B cell (primary cell): ENCODE measurements at regions of chr16 and their contacts with region 1.

Region 1: DNA sequence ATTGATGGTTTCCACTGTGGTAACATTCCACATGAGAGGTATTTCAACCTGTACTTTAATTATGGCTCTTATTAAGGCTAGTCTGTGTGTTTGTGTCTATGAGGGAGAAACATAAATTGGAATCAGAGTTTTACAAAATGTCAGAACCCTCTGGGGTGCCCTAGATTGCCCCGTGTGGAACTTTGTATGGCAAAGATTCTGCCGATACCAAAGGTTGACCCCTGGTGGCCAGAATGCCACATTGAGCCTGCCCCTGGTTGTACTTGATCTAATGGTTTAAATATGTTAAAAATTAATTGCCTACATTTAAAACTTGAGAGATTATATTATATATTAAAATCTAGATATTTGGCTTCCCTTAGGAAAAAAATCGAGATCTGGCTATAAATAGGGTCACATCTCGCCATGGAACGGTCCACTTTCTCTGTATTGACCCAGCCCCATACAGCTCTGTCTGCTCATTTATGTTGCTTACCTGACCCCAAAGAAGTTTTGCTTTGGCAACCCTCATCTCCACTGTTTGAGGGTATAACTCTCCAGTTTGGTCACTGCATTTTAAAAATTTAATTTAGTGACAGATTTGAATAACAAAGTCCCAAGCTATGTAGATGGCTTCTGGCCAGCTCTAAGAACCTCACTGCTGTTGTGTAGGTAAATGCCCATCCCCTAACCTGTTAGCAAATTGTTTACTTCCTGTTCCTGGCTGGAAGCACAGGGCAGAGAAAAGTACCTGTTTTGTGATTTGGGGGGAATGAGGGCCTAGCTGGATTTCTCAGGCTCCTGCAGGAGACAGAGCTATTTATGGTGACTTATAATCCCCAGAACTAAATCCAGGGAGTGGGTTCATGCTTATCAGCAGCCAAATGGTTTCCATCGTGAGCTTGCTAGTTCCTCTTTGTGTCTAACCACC is 95.0 kb downstream of the PLCG2 start:
- DNase-seq: peak; percentile 80
- ATAC-seq: peak; percentile 93
- H3K4me3 ChIP-seq: no peak overlapping the region
- H3K4me3 Mint-ChIP-seq: peak overlapping the region; percentile 4
- H3K27ac ChIP-seq: peak overlapping the region in 1 of 2 donors; percentile 48
- H3K27ac Mint-ChIP-seq: peak overlapping the region; percentile 67
- H3K4me1 ChIP-seq: peaks cover 22 to 24% of the 10 kb centered on the region in 2 donors
- H3K4me1 Mint-ChIP-seq: peaks cover 41% of the 10 kb centered on the region
- H3K27me3 ChIP-seq: no peaks in the 10 kb centered on the region
- H3K27me3 Mint-ChIP-seq: no peaks in the 10 kb centered on the region
- CTCF ChIP-seq: peak; percentile 97

Region 2: DNA sequence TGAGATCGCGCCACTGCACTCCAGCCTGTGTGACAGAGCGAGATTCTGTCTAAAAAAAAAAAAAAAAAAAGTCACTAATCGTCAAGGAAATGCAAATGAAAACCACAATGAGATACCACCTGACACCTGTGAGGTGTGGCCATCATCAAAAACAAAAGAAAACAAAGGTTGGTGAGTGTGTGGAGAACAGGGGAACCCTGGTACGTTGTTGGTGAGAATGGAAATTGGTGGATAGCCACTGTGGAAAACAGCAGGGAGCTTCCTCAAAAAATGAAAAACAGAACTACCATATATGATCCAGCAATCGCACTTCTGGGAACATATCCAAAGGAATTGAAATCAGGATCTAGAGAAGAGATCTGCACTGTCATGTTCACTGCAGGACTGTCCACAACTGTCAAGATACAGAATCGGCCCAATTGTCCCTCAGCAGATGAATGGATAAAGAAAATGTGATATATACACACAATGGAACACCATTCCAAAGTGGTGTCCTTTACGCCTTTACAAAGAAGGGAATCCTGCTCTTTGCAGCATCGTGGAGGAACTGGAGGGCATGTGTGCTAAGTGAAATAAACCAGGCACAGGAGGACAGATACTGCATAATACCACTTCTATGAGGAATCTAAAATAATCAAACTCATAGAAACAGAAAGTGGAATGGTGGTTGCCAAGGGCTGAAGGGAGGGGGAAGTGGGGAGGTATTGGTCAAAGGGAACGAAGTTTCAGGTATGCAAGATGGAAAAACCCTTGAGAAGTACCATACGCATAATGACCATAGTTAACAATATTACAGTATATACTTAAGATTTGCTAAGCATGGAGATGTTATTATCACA is 158.5 kb before region 1 on chr16:
- CTCF ChIA-PET with region 1: interaction called, 10 read pairs
- POLR2A ChIA-PET with region 1: no interaction called
- intact Hi-C with region 1: no loop called
- DNase-seq: peak; percentile 82
- ATAC-seq: peak; percentile 74
- H3K4me3 ChIP-seq: peak overlapping the region; percentile 15 to 63 (median 24)
- H3K4me3 Mint-ChIP-seq: peak overlapping the region; percentile 90
- H3K27ac ChIP-seq: peak overlapping the region; percentile 65 to 86
- H3K27ac Mint-ChIP-seq: peak overlapping the region; percentile 89
- H3K4me1 ChIP-seq: peaks cover 42 to 57% of the 10 kb centered on the region in 2 donors
- H3K4me1 Mint-ChIP-seq: peaks cover 50% of the 10 kb centered on the region
- H3K27me3 ChIP-seq: no peaks in the 10 kb centered on the region
- H3K27me3 Mint-ChIP-seq: no peaks in the 10 kb centered on the region
- CTCF ChIP-seq: no peak

Region 3: GRCh38 chr16:81752225-81752875 is 121.7 kb before region 1 on chr16:
- CTCF ChIA-PET with region 1: interaction called, 18 read pairs
- POLR2A ChIA-PET with region 1: no interaction called
- intact Hi-C with region 1: loop called (anchors 1 kb)
- DNase-seq: peak; percentile 87
- ATAC-seq: peak; percentile 96
- H3K4me3 ChIP-seq: peak overlapping the region in 4 of 5 experiments; percentile 6 to 58 (median 34)
- H3K4me3 Mint-ChIP-seq: peak overlapping the region; percentile 67
- H3K27ac ChIP-seq: peak overlapping the region; percentile 76 to 87
- H3K27ac Mint-ChIP-seq: peak overlapping the region; percentile 87
- H3K4me1 ChIP-seq: peaks cover 67 to 82% of the 10 kb centered on the region in 2 donors
- H3K4me1 Mint-ChIP-seq: peaks cover 67% of the 10 kb centered on the region
- H3K27me3 ChIP-seq: no peaks in the 10 kb centered on the region
- H3K27me3 Mint-ChIP-seq: no peaks in the 10 kb centered on the region
- CTCF ChIP-seq: no peak

Region 4: DNA sequence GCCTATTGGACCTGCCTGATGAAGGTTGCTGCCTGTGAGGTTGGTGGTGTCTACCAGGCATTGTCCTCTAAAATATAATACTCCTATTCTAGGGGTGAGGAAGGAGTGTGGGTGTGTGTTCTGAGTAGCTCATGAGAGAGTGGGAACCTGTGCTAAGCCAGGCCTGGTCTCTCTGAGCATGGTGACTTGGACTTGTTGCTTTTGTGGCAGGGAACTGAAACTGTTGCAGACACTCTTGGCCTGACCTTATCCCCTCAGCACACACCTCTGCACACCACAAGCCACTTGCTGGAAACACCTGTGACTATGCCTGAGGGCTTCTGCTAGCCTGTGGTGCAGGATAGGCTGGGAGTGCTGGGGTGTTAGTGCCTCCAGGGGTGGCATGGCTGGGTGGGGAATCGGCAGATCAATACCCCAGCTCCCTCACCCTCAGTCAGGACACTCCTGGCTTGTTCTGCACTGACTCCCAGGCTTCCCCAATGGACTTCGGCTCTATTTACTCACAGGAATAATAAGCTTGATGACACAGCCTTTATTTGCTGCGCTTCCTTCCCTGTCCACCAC is 65.1 kb before region 1 on chr16:
- CTCF ChIA-PET with region 1: interaction called, 11 read pairs
- POLR2A ChIA-PET with region 1: interaction called, 3 read pairs
- intact Hi-C with region 1: no loop called
- DNase-seq: peak; percentile 91
- ATAC-seq: peak; percentile 78
- H3K4me3 ChIP-seq: peak overlapping the region in 4 of 5 experiments; percentile 5 to 43 (median 20)
- H3K4me3 Mint-ChIP-seq: peak overlapping the region; percentile 77
- H3K27ac ChIP-seq: peak overlapping the region; percentile 85 to 94
- H3K27ac Mint-ChIP-seq: peak overlapping the region; percentile 97
- H3K4me1 ChIP-seq: peaks cover 87 to 91% of the 10 kb centered on the region in 2 donors
- H3K4me1 Mint-ChIP-seq: peaks cover 96% of the 10 kb centered on the region
- H3K27me3 ChIP-seq: no peaks in the 10 kb centered on the region
- H3K27me3 Mint-ChIP-seq: no peaks in the 10 kb centered on the region
- CTCF ChIP-seq: no peak

Region 5: GRCh38 chr16:81831722-81832126 is 42.4 kb before region 1 on chr16:
- CTCF ChIA-PET with region 1: interaction called, 20 read pairs
- POLR2A ChIA-PET with region 1: no interaction called
- intact Hi-C with region 1: loop called (anchors 2 kb)
- DNase-seq: peak; percentile 88
- ATAC-seq: peak; percentile 75
- H3K4me3 ChIP-seq: peak overlapping the region; percentile 38 to 58 (median 49)
- H3K4me3 Mint-ChIP-seq: peak overlapping the region; percentile 85
- H3K27ac ChIP-seq: peak overlapping the region; percentile 73 to 77
- H3K27ac Mint-ChIP-seq: peak overlapping the region; percentile 90
- H3K4me1 ChIP-seq: peaks cover 94 to 100% of the 10 kb centered on the region in 2 donors
- H3K4me1 Mint-ChIP-seq: peaks cover 92% of the 10 kb centered on the region
- H3K27me3 ChIP-seq: no peaks in the 10 kb centered on the region
- H3K27me3 Mint-ChIP-seq: no peaks in the 10 kb centered on the region
- CTCF ChIP-seq: peak; percentile 60

Region 6: GRCh38 chr16:81855552-81856153 is 18.4 kb before region 1 on chr16:
- CTCF ChIA-PET with region 1: interaction called, 32 read pairs
- POLR2A ChIA-PET with region 1: interaction called, 5 read pairs
- intact Hi-C with region 1: no loop called
- DNase-seq: no peak
- ATAC-seq: no peak
- H3K4me3 ChIP-seq: no peak overlapping the region
- H3K4me3 Mint-ChIP-seq: no peak overlapping the region
- H3K27ac ChIP-seq: peak overlapping the region in 1 of 2 donors; percentile 47
- H3K27ac Mint-ChIP-seq: peak overlapping the region; percentile 69
- H3K4me1 ChIP-seq: peaks cover 22 to 36% of the 10 kb centered on the region in 2 donors
- H3K4me1 Mint-ChIP-seq: peaks cover 49% of the 10 kb centered on the region
- H3K27me3 ChIP-seq: no peaks in the 10 kb centered on the region
- H3K27me3 Mint-ChIP-seq: no peaks in the 10 kb centered on the region
- CTCF ChIP-seq: no peak

Region 7: DNA sequence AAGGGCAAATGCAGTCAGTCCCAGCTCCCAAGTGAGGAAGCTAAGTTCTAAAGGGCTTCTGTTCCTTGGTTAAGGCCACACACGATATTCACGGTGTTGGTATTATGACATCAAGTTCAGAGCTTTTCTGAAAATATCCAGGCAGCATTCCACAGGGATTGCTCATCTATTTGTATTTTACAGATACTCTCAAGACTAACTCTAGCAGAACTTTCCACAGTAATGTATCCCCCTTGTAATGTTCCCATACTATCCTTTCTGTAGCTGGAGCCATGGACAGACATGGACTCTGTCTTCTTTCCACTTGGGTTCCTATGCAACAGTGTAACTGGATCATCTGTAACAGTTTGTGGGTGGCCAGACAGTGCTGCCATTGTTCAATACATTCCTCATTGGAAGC is 123.6 kb after region 1 on chr16:
- CTCF ChIA-PET with region 1: no interaction called
- POLR2A ChIA-PET with region 1: no interaction called
- intact Hi-C with region 1: no loop called
- DNase-seq: no peak
- ATAC-seq: no peak
- H3K4me3 ChIP-seq: no peak overlapping the region
- H3K4me3 Mint-ChIP-seq: no peak overlapping the region
- H3K27ac ChIP-seq: no peak overlapping the region
- H3K27ac Mint-ChIP-seq: no peak overlapping the region
- H3K4me1 ChIP-seq: no peaks in the 10 kb centered on the region
- H3K4me1 Mint-ChIP-seq: no peaks in the 10 kb centered on the region
- H3K27me3 ChIP-seq: no peaks in the 10 kb centered on the region
- H3K27me3 Mint-ChIP-seq: no peaks in the 10 kb centered on the region
- CTCF ChIP-seq: no peak

Region 8: GRCh38 chr16:82031116-82032084 is 157.3 kb after region 1 on chr16:
- CTCF ChIA-PET with region 1: no interaction called
- POLR2A ChIA-PET with region 1: no interaction called
- intact Hi-C with region 1: no loop called
- DNase-seq: no peak
- ATAC-seq: no peak
- H3K4me3 ChIP-seq: no peak overlapping the region
- H3K4me3 Mint-ChIP-seq: no peak overlapping the region
- H3K27ac ChIP-seq: no peak overlapping the region
- H3K27ac Mint-ChIP-seq: no peak overlapping the region
- H3K4me1 ChIP-seq: no peaks in the 10 kb centered on the region
- H3K4me1 Mint-ChIP-seq: no peaks in the 10 kb centered on the region
- H3K27me3 ChIP-seq: peaks cover 0 to 2% (median 0%) of the 10 kb centered on the region in 4 experiments
- H3K27me3 Mint-ChIP-seq: peaks cover 25% of the 10 kb centered on the region
- CTCF ChIP-seq: no peak

Region 9: DNA sequence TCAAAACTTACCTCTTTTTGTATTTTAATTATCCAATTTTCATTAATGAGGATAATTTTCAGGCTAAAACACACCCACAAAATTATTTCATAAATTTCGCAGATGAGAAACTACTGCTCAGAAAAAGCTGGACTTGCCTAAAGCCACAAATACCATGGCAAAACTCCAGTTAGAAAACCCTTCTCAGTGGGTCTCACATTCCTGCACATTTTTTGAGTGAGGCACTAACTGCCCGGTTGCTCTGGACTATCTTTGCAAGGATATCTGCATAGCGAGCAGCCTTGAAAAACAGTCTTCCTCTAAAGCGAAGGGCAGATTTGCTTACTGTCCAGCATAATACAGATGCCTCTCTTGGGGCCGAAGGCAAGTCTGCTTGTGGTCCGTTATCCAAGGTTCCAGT is 286.1 kb after region 1 on chr16:
- CTCF ChIA-PET with region 1: no interaction called
- POLR2A ChIA-PET with region 1: no interaction called
- intact Hi-C with region 1: no loop called
- DNase-seq: no peak
- ATAC-seq: no peak
- H3K4me3 ChIP-seq: no peak overlapping the region
- H3K4me3 Mint-ChIP-seq: no peak overlapping the region
- H3K27ac ChIP-seq: no peak overlapping the region
- H3K27ac Mint-ChIP-seq: no peak overlapping the region
- H3K4me1 ChIP-seq: no peaks in the 10 kb centered on the region
- H3K4me1 Mint-ChIP-seq: no peaks in the 10 kb centered on the region
- H3K27me3 ChIP-seq: no peaks in the 10 kb centered on the region
- H3K27me3 Mint-ChIP-seq: no peaks in the 10 kb centered on the region
- CTCF ChIP-seq: no peak